ENCODE measurements at regions of chr2 and their contacts with region 1.

Region 1: GRCh38 chr2:85132834-85133637 is at the start of gene TCF7L1:
- DNase-seq: peak; percentile 67 to 77
- ATAC-seq: peak; percentile 82 to 84
- H3K4me3 ChIP-seq: peak within 1 kb of the TSS; percentile 69 to 94 (median 80)
- H3K27ac ChIP-seq: peak within 1 kb of the TSS; percentile 74 to 83 (median 76)
- H3K4me1 ChIP-seq: peaks cover 13 to 29% of the 10 kb centered on the region in 2 donors
- H3K27me3 ChIP-seq: no peaks in the 10 kb centered on the region
- CTCF ChIP-seq: peak; percentile 86 to 98 (median 91)
- POLR2A ChIP-seq: peak; percentile 57 to 68
- total RNA-seq, gene TCF7L1: 1.1 to 3.9 (median 2.8) TPM

Region 2: GRCh38 chr2:85066874-85067351 is 66.1 kb before region 1 on chr2:
- in situ Hi-C with region 1: no loop called
- intact Hi-C with region 1: loop called (anchors 5 kb)
- DNase-seq: peak; percentile 33 to 59
- ATAC-seq: peak; percentile 60 to 81
- H3K4me3 ChIP-seq: peak overlapping the region; percentile 41 to 48 (median 43)
- H3K27ac ChIP-seq: no peak overlapping the region
- H3K4me1 ChIP-seq: peaks cover 5 to 8% of the 10 kb centered on the region in 2 donors
- H3K27me3 ChIP-seq: peaks cover 0 to 3% (median 0%) of the 10 kb centered on the region in 3 donors
- CTCF ChIP-seq: peak; percentile 67 to 85 (median 78)
- POLR2A ChIP-seq: no peak

Region 3: GRCh38 chr2:85213901-85214512 is 81.0 kb after region 1 on chr2:
- in situ Hi-C with region 1: no loop called
- intact Hi-C with region 1: loop called (anchors 1 kb)
- DNase-seq: no peak
- ATAC-seq: peak; percentile 25 to 55
- H3K4me3 ChIP-seq: peak overlapping the region in 2 of 4 donors; percentile 27 to 29
- H3K27ac ChIP-seq: peak overlapping the region; percentile 68 to 79 (median 76)
- H3K4me1 ChIP-seq: peaks cover 43 to 47% of the 10 kb centered on the region in 2 donors
- H3K27me3 ChIP-seq: no peaks in the 10 kb centered on the region
- CTCF ChIP-seq: no peak
- POLR2A ChIP-seq: no peak

Region 4: GRCh38 chr2:85282914-85283313 is 149.9 kb after region 1 on chr2:
- in situ Hi-C with region 1: loop called in 3 of 4 experiments (anchors 5 to 10 kb)
- intact Hi-C with region 1: loop called (anchors 1 kb)
- DNase-seq: no peak
- ATAC-seq: no peak
- H3K4me3 ChIP-seq: no peak overlapping the region
- H3K27ac ChIP-seq: no peak overlapping the region
- H3K4me1 ChIP-seq: peaks cover 0 to 4% of the 10 kb centered on the region in 2 donors
- H3K27me3 ChIP-seq: no peaks in the 10 kb centered on the region
- CTCF ChIP-seq: no peak
- POLR2A ChIP-seq: no peak

Region 5: DNA sequence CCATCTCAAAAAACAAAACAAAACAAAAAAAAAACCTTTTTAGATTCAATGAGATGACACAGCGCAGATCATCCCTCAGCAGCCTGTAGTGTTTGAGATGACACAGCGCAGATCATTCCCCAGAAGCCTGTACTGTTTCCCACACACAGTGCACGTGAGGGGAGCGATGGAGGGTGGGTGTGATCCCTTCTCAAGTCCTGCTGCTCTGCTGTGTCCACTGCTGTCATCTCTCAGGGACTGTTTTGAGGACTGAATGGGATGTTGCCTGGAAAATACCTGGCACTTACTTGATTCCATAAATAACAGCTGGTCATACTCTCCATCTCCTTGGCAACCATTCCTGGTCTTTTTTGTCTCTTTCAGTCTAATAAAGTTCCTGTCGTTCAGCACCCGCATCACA is 169.1 kb after region 1 on chr2:
- in situ Hi-C with region 1: no loop called
- intact Hi-C with region 1: loop called (anchors 1 kb)
- DNase-seq: no peak
- ATAC-seq: no peak
- H3K4me3 ChIP-seq: no peak overlapping the region
- H3K27ac ChIP-seq: no peak overlapping the region
- H3K4me1 ChIP-seq: peaks cover 4 to 6% of the 10 kb centered on the region in 2 donors
- H3K27me3 ChIP-seq: no peaks in the 10 kb centered on the region
- CTCF ChIP-seq: no peak
- POLR2A ChIP-seq: no peak

Measured in gastrocnemius medialis (tissue), 4 donors.